ENCODE measurements at regions of chr12 and their contacts with region 1.

Region 1: DNA sequence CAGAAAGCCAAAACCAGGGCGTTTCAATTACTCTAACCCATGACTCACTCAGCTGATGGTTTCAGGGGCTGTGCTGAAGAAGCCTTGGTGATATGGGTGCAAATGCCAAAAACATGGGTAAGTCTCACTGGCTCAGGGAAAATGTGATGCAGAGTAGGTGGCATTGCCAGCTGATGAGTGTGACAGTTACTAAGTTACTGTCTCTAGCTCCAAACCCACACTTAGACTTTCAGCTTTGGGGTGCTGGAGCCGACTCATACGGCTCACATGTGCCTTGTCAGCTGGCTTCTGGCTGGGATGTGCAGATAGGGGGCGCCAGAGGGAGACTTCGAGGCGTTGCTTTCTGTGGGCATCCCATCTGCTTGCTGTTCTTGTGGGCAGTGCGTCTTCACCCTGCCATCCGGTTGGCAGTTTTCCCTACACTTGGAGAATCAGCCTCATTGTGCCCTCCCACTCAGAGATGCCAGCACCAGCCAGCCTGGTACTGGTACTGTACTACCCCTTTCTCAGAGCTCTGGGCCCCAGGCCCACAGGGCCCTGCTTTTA is 11.1 kb upstream of the KRT7 start:
- DNase-seq: peak; percentile 85
- H3K4me3 Mint-ChIP-seq: no peak overlapping the region
- H3K27ac Mint-ChIP-seq: no peak overlapping the region
- H3K4me1 Mint-ChIP-seq: peaks cover 15% of the 10 kb centered on the region
- H3K27me3 Mint-ChIP-seq: peaks cover 53% of the 10 kb centered on the region

Region 2: DNA sequence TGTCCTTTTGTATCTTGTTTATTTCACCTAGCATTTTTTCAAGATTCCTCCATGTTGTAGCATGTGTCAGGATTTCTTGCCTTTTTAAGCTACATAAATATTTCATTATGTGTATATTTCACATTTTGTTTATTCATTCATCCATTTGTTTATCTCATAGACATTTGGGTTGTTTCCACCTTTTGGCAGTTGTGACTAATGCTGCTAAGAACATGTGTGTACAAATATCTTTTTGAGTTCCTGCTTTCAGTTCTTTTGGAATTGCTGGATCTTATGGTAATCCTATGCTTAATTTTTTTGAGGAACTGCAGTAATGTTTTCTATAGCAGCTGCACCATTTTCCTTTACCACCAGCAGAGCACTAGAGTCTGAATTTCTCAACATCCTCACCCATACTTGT is 568.6 kb before region 1 on chr12:
- CTCF ChIA-PET with region 1: no interaction called
- POLR2A ChIA-PET with region 1: no interaction called
- DNase-seq: no peak
- H3K4me3 Mint-ChIP-seq: no peak overlapping the region
- H3K27ac Mint-ChIP-seq: no peak overlapping the region
- H3K4me1 Mint-ChIP-seq: no peaks in the 10 kb centered on the region
- H3K27me3 Mint-ChIP-seq: peaks cover 35% of the 10 kb centered on the region

Region 3: GRCh38 chr12:52156736-52157565 is 65.0 kb before region 1 on chr12:
- CTCF ChIA-PET with region 1: interaction called, 12 read pairs
- POLR2A ChIA-PET with region 1: no interaction called
- DNase-seq: peak; percentile 80
- H3K4me3 Mint-ChIP-seq: no peak overlapping the region
- H3K27ac Mint-ChIP-seq: no peak overlapping the region
- H3K4me1 Mint-ChIP-seq: peaks cover 46% of the 10 kb centered on the region
- H3K27me3 Mint-ChIP-seq: no peaks in the 10 kb centered on the region

Region 4: DNA sequence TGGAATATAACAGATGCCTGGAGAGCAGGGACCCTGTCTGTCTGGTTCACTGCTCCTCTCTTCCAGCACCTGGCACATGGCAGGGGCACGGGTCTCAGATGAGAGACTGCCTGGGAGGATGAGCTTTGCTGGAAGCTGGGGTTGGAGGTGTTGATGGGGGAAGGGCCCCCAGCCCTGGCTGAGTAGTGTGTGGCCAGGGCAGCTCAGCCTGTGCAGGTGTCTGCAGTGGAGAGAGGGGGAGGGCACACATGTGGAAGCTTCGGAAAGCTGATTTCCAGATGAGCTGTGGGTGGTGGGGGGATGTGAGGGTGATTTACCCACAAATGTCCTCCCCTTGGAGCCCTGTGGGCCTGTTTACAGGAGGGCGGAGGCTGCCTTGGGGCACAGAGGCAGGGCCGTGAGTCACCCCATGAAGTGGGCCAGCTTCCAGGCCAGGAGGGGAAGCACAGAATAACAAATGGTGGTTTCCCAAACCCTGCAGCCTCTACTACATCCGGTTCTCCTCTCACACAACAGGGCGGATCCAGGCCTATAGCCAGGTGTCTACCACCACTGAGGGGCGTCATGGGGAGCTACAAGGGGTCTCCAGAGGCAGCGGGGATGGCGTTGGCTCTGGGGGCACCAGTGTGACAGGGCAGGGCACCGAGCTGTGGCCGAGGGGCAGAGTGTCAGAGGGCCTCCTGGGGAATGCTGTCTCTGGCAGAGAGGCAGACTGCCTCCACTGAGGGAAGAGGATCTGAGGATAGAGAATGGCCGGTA is 22.1 kb after region 1 on chr12:
- CTCF ChIA-PET with region 1: interaction called, 11 read pairs
- POLR2A ChIA-PET with region 1: interaction called, 3 read pairs
- DNase-seq: peak; percentile 78
- H3K4me3 Mint-ChIP-seq: peak overlapping the region; percentile 66
- H3K27ac Mint-ChIP-seq: peak overlapping the region; percentile 89
- H3K4me1 Mint-ChIP-seq: peaks cover 56% of the 10 kb centered on the region
- H3K27me3 Mint-ChIP-seq: peaks cover 6% of the 10 kb centered on the region

Region 5: GRCh38 chr12:52250048-52250990 is 28.3 kb after region 1 on chr12:
- CTCF ChIA-PET with region 1: interaction called, 20 read pairs
- POLR2A ChIA-PET with region 1: interaction called, 3 read pairs
- DNase-seq: no peak
- H3K4me3 Mint-ChIP-seq: no peak overlapping the region
- H3K27ac Mint-ChIP-seq: peak overlapping the region; percentile 10
- H3K4me1 Mint-ChIP-seq: peaks cover 69% of the 10 kb centered on the region
- H3K27me3 Mint-ChIP-seq: peaks cover 12% of the 10 kb centered on the region

Region 6: DNA sequence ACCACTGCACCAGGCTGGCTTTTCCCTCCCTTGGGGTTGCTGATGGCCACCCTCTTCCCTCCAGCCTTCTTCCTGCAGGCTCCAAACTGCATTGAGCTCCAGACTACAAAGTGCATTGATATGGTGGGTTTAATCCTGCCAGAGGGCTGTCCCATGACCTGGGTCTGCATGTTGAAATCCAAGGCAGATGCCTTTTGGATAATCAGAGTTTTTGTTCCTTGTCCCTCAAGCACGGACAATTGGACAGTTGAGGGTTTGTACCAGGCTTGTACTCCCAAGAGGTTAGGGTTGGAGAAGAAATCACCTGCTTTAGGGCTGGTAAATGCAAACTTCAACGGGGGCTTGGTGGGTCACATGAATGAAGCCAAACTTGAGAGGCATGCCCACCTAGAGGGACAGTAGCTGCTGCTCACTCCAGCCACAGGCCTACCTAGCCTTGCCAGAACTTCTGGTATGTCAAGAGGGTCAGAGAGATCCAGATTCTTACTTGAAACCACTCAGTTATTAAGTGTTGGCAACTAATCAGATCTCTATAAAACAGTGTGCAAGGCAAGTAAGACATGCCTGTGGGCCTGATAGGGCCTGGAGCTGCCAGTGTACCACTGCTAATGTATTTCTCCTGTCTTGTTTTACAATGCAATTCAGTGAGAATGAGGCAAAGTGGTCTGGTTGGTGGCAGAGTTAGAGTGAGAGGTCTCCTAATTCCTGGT is 121.0 kb after region 1 on chr12:
- CTCF ChIA-PET with region 1: no interaction called
- POLR2A ChIA-PET with region 1: no interaction called
- DNase-seq: no peak
- H3K4me3 Mint-ChIP-seq: no peak overlapping the region
- H3K27ac Mint-ChIP-seq: no peak overlapping the region
- H3K4me1 Mint-ChIP-seq: no peaks in the 10 kb centered on the region
- H3K27me3 Mint-ChIP-seq: peaks cover 23% of the 10 kb centered on the region

Region 7: DNA sequence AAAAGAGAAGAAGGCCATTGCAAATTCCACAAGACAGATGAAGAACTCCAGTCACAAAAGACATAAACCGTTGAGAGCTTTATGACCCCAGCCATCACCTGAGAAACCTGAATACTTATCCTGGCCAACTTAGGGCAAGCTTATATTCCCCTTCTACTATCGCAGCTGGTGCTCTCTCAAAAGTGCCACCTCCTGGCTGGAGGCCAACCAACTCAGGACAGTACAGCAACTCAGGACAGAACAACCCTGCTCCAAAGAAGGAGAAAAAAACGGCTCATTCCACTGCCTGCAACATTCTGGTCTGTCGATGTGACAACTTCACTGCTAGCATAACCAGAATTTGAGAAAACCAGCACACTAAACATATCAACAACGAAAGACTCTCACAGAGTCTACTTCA is 239.7 kb after region 1 on chr12:
- CTCF ChIA-PET with region 1: no interaction called
- POLR2A ChIA-PET with region 1: no interaction called
- DNase-seq: no peak
- H3K4me3 Mint-ChIP-seq: no peak overlapping the region
- H3K27ac Mint-ChIP-seq: no peak overlapping the region
- H3K4me1 Mint-ChIP-seq: no peaks in the 10 kb centered on the region
- H3K27me3 Mint-ChIP-seq: peaks cover 37% of the 10 kb centered on the region

Region 8: GRCh38 chr12:52618216-52618615 is 396.2 kb after region 1 on chr12 and contains the start of gene KRT73:
- CTCF ChIA-PET with region 1: no interaction called
- POLR2A ChIA-PET with region 1: no interaction called
- DNase-seq: peak; percentile 12
- H3K4me3 Mint-ChIP-seq: no peak within 1 kb of the TSS
- H3K27ac Mint-ChIP-seq: no peak within 1 kb of the TSS
- H3K4me1 Mint-ChIP-seq: peaks cover 10% of the 10 kb centered on the region
- H3K27me3 Mint-ChIP-seq: peaks cover 15% of the 10 kb centered on the region
- total RNA-seq, gene KRT73: not detected

Measured in activated CD4-positive, alpha-beta memory T cell treated with anti-CD3 and anti-CD28 coated beads, Interleukin-2, amount 10 ng/mL, durations not matched to agents 7 days and 5 days (primary cell).